AG04449 (cell line): ENCODE measurements at regions of chr1 and their contacts with region 1.

Region 1: DNA sequence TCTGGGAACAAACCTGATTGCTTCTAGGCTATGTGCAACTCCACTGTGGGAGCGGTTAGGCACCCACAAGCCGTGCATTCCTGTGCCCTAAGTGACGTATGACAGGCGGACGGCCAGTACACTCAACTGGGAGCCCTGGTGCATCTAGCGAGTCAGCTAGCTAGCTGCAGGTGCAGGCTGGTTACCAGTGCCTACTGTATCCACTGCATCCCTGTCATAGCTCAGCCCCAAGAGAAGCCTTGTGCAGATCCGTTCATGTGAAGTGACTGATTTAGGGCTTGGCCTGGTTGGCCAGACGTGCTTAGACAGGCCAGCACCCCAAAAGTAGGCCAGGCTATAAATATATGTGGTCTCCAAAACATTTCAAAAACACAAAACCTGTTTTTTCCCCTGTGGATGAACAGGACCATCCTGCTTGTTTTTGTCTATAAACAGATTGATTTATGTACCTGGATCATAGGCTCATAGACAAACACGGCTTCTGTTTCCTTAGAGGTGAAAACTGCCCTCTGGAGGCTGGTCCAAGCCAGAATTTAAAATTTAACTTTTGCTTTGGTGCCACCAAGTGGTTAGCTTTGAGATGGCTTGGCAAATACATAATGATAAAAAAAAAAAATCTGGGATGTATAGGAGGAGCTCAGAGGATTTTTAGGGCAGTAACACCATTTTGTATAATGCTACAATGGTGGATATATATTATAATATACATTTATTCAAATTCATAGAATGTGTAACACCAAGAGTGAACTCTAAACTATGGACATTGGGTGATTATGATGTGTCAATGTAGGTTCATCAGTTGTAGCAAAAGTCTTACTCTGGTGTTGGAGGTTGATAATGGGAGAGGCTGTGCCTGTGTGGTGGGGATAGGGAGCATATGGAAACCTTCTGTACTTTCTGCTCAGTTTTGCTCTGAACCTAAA is 68.5 kb downstream of the GIPC2 start:
- DNase-seq: peak; percentile 19
- H3K4me3 ChIP-seq: no peak overlapping the region
- CTCF ChIP-seq: peak; percentile 71

Region 2: GRCh38 chr1:77948841-77949424 is 165.4 kb before region 1 on chr1:
- CTCF ChIA-PET with region 1: interaction called, 17 read pairs
- POLR2A ChIA-PET with region 1: no interaction called
- DNase-seq: no peak
- H3K4me3 ChIP-seq: no peak overlapping the region
- CTCF ChIP-seq: peak; percentile 15

Region 3: GRCh38 chr1:77966291-77966690 is 148.0 kb before region 1 on chr1:
- CTCF ChIA-PET with region 1: interaction called, 19 read pairs
- POLR2A ChIA-PET with region 1: no interaction called
- DNase-seq: no peak
- H3K4me3 ChIP-seq: no peak overlapping the region
- CTCF ChIP-seq: no peak

Region 4: GRCh38 chr1:77986810-77987209 is 127.5 kb before region 1 on chr1:
- CTCF ChIA-PET with region 1: interaction called, 40 read pairs
- POLR2A ChIA-PET with region 1: no interaction called
- DNase-seq: no peak
- H3K4me3 ChIP-seq: no peak overlapping the region
- CTCF ChIP-seq: no peak

Region 5: GRCh38 chr1:78079580-78079979 is 34.7 kb before region 1 on chr1:
- CTCF ChIA-PET with region 1: interaction called, 12 read pairs
- POLR2A ChIA-PET with region 1: no interaction called
- DNase-seq: no peak
- H3K4me3 ChIP-seq: no peak overlapping the region
- CTCF ChIP-seq: no peak

Region 6: DNA sequence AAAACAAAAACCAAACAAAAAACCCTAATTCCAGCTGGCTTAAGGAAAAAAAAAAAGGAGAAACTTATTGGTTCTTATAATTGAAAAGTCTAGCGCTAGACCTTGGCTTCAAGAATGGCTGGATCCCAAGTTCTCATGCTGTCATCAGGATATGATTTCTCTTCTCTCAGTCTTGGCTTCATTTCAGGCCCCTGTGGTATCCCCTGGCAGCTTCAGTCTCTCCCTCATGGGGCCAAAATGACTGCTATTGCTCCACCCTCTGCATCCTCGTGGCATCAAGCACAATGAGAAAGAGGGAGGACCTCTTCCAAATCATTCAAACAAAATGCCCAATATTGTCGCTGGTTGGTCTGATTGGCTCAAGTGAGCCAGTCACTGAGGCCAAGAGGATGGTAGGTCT is 12.2 kb after region 1 on chr1:
- CTCF ChIA-PET with region 1: interaction called, 11 read pairs
- POLR2A ChIA-PET with region 1: no interaction called
- DNase-seq: no peak
- H3K4me3 ChIP-seq: no peak overlapping the region
- CTCF ChIP-seq: no peak

Region 7: DNA sequence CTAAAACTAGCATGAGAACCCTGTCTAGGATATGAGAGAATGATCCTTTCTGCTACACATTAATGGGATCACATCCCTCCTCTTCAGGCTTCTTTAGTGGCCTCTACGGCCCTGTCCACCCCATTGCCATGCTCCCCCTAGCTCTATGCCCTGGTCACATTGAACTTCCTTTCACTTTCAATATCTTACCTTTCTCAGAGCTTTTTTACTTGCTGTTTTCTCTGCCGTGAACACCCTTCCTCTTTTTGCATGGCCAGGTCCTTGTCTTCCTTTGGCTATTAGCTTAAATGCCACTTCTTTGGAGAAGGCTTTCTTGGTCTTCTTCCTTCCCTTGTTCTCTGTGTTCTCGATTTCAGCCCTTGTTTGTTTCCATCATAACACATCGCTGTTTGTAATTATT is 28.9 kb after region 1 on chr1:
- CTCF ChIA-PET with region 1: no interaction called
- POLR2A ChIA-PET with region 1: no interaction called
- DNase-seq: no peak
- H3K4me3 ChIP-seq: no peak overlapping the region
- CTCF ChIP-seq: no peak

Region 8: GRCh38 chr1:78426408-78426807 is 312.1 kb after region 1 on chr1:
- CTCF ChIA-PET with region 1: no interaction called
- POLR2A ChIA-PET with region 1: no interaction called
- DNase-seq: no peak
- H3K4me3 ChIP-seq: no peak overlapping the region
- CTCF ChIP-seq: no peak